Activated CD8-positive, alpha-beta T cell treated with anti-CD3 and anti-CD28 coated beads, Interleukin-2, amount 10 ng/mL, durations not matched to agents 7 days and 5 days (primary cell): ENCODE measurements at regions of chr5 and their contacts with region 1.

Region 1: GRCh38 chr5:115098041-115098702 is 71.5 kb downstream of the TRIM36 start:
- DNase-seq: peak; percentile 50
- ATAC-seq: peak; percentile 67
- H3K4me3 Mint-ChIP-seq: no peak overlapping the region
- H3K27ac Mint-ChIP-seq: no peak overlapping the region
- H3K4me1 Mint-ChIP-seq: no peaks in the 10 kb centered on the region
- H3K27me3 Mint-ChIP-seq: peaks cover 11% of the 10 kb centered on the region

Region 2: DNA sequence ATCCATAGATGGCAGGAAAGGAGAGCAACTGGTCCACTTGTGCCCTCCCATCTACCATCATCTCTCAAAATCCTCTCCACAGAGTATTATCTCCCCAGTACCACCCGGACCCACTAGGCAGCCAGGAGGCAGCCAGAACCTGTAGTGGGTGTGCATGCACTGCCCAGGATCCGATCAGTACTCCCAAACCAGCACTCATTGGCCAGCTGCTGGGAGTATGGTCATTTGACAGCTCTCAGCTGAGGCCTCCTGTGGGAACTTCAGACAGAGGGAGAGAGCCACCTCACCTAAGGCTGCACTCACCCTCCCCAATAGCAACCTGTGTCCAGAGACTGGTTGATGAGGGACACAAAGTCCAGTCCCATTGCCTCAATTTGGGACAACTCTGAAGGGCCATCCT is 214.5 kb before region 1 on chr5:
- CTCF ChIA-PET with region 1: no interaction called
- POLR2A ChIA-PET with region 1: no interaction called
- DNase-seq: no peak
- ATAC-seq: no peak
- H3K4me3 Mint-ChIP-seq: no peak overlapping the region
- H3K27ac Mint-ChIP-seq: no peak overlapping the region
- H3K4me1 Mint-ChIP-seq: no peaks in the 10 kb centered on the region
- H3K27me3 Mint-ChIP-seq: no peaks in the 10 kb centered on the region

Region 3: DNA sequence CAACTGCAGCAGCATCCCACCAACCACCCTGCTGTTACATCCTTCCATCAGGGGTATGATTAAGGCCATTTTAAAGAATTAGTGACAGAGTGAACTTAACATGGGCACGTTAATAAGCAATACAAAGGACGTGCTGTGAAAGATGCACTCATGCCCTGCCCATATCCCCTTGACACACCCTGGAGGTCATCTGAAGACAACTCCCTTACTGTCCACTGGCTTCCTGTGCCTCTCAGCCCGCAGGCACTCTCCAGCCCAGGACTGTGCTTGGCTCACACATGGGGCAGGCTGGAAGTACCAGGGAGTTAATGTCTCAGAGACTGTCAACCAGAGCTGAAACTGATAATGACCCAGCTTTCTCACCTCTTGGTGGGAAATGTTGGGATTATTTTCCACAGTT is 10.2 kb before region 1 on chr5:
- CTCF ChIA-PET with region 1: interaction called, 14 read pairs
- POLR2A ChIA-PET with region 1: no interaction called
- DNase-seq: no peak
- ATAC-seq: no peak
- H3K4me3 Mint-ChIP-seq: no peak overlapping the region
- H3K27ac Mint-ChIP-seq: no peak overlapping the region
- H3K4me1 Mint-ChIP-seq: no peaks in the 10 kb centered on the region
- H3K27me3 Mint-ChIP-seq: peaks cover 8% of the 10 kb centered on the region

Region 4: DNA sequence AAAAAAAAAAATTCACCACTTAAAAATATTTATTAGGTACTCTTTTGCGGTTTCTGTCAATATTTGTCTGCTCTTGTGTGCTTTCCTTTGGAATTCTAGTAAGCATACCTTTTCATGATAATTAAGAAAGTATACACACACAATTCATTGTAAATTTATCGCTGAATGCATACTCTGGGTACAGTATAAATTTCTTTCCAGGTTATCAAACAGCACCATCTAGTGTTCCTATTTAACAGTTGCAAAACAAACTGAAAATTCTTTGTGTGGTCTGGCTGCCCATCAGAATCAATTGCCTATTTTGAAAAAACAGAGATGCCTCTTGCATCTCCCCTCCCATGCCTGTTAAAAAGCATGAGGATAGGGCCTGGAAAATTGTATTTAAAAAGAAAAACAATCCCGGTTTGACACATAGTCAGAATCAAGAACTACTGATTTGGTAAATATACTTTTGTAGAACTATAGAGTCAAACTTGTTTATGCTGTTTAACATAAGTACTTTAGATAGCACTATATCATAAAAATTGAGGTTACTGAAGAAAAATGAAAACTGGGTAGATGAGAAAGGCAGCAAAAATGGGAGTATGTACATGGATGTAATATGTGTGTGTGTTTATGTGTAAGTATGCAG is 148.3 kb after region 1 on chr5:
- CTCF ChIA-PET with region 1: interaction called, 20 read pairs
- POLR2A ChIA-PET with region 1: interaction called, 3 read pairs
- DNase-seq: no peak
- ATAC-seq: peak; percentile 67
- H3K4me3 Mint-ChIP-seq: no peak overlapping the region
- H3K27ac Mint-ChIP-seq: no peak overlapping the region
- H3K4me1 Mint-ChIP-seq: no peaks in the 10 kb centered on the region
- H3K27me3 Mint-ChIP-seq: no peaks in the 10 kb centered on the region